Mucosa of descending colon (tissue), 3 donors: ENCODE measurements at regions of chr16 and their contacts with region 1.

Region 1: DNA sequence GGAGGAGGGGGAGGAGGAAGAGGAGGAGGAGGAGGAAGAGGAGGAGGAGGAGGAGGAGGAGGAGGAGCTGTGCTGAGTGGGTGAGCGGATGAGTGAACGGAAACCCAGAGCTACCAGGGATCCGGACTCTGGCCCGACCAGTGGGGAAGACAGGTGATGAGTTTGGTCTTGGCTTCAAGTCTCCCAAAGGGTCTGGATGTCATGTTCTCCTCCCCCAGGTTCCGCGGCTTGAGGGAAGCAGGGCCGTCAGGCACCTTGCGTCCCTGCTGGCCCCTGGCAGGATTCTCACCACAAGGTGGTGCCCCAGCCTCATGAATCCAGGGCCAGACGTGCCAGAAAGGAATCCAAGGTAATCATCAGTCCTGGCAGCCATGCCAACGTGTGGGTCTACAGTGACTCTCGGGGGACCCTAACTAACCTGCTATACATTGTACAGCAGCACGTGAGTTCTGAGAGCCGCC is 13.5 kb upstream of the ABAT start:
- DNase-seq: peak; percentile 61 to 82 (median 79)
- ATAC-seq: peak; percentile 95
- H3K4me3 ChIP-seq: no peak overlapping the region
- H3K4me1 ChIP-seq: no peaks in the 10 kb centered on the region
- CTCF ChIP-seq: peak; percentile 39

Region 2: DNA sequence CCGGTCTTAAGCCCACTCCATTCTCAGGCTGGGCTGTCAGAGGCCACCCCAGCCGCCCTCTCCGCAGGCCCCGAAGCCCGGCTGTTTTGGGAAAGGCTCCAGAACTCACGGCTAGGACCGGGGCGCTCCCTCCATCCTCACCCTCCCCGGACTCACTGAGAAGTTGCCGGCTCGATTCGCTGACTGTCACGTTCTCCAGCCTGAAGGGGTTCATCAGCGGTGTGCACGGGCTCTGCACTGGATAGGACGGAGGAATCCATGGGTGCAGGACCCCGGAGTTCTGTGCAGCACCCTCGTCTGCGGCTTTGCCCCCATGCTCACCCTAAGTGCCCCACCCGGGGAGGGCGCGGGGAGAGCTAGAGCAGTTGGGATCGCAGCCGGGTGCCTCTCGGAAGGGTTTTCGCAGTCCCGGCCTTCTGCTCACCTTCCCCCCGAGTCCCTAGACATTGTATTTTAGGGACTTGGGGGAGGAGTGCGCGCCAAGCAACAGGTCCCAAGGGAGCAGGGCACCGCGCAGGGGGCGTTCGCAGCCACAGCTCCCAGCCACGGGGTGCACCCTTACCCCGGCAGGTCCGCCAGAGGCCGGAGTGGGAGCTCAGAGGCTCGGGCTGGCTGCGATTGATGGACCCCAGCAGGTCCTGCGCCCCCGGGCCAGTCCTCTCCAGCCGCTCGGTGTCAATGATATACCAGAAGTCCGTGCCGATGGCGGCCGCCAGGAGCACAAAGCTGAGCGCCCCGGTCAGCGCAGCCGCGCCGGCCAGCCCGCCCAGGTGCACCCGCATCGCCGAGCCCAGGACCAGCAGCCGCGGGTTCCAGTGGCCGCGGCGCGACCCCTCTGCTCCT is 71.6 kb before region 1 on chr16:
- intact Hi-C with region 1: no loop called
- DNase-seq: no peak
- ATAC-seq: peak; percentile 49
- H3K4me3 ChIP-seq: no peak overlapping the region
- H3K4me1 ChIP-seq: peaks cover 7% of the 10 kb centered on the region
- CTCF ChIP-seq: no peak

Region 3: DNA sequence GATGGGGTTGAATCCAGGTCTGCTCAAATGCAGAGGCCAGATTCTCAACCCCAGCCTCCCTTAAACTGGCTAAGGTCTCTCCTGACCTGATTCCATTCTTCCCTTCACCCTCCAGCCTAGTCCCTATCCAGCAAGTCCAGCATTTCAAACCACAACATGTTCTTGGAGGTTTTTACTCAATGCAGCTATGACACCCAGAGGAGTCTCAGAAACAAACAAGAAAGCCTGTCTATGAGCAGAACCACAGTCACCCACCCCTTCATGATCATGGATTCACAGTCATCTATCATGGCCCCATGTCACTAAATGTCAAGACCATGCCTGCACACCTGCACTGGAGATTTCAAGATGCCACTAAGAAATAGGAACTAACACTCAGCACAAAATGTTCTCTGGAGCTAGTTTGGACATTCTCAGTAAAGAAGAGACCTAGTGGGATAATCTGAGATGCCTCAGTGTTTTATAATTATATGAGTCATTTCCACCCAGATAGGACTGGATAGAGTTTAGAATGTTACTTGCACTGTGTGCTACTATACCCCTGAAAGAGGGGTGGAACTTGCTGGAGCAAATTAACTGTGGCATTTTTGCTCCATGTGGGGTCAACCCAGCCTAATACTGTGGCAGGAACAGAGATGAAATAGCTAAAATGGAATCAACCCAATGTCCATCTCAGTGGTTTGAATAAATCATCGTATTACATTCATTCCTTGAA is 48.8 kb before region 1 on chr16:
- intact Hi-C with region 1: no loop called
- DNase-seq: no peak
- ATAC-seq: no peak
- H3K4me3 ChIP-seq: no peak overlapping the region
- H3K4me1 ChIP-seq: no peaks in the 10 kb centered on the region
- CTCF ChIP-seq: no peak

Region 4: DNA sequence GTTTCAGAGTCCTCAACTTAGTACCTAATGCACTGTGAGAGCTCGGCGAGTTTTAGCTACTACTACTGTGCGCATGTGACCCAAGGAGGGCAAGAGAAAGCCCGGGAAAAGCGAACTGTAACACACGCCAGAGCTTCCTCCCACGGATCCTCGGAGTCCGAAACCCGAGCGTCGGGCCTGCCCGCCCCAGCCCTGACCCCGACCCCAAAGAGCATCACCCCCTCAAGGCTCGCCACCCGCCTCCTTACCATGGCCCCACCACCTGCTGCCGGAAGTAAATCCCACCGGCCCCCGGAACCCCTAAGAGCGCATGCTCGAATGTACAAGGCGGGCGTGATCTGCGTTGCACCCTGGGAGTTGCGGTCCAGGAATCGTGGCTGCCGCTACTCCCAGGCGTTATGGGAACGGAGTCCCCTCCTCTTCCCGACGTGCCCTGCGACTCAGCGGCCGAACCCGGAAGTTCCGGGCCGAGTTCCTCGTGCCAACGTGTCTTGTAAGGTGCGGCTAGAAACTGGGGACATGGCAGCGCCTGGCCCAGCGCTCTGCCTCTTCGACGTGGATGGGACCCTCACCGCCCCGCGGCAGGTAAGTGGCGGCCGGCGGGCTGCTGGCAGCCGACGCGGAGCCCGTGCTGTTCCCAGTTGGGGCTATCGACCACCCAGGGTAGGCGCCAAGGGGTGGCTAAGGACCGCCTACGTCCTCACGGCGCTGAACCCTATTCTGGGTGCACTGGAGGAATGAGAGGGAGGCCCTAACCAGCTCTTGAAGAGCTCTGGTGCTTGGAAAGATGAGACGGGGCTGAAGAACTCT is 136.7 kb after region 1 on chr16 and contains the starts of genes PMM2 and TMEM186:
- intact Hi-C with region 1: loop called in 1 of 2 experiments (anchors 5 kb)
- DNase-seq: peak; percentile 96 to 98 (median 98)
- ATAC-seq: peak; percentile 97
- H3K4me3 ChIP-seq: peak within 1 kb of the TSS; percentile 74
- H3K4me1 ChIP-seq: peaks cover 33% of the 10 kb centered on the region
- CTCF ChIP-seq: no peak
- total RNA-seq, gene PMM2: 46.4 to 77.9 (median 74.9) TPM
- total RNA-seq, gene TMEM186: 12.2 to 13.9 (median 13.2) TPM